Activated CD8-positive, alpha-beta T cell treated with anti-CD3 and anti-CD28 coated beads for 36 hours (primary cell): ENCODE measurements at regions of chr21 and their contacts with region 1.

Region 1: GRCh38 chr21:44927587-44928461 is 7.1 kb upstream of the ITGB2 start:
- DNase-seq: peak; percentile 98
- ATAC-seq: peak; percentile 75
- H3K4me3 Mint-ChIP-seq: peak overlapping the region; percentile 78
- H3K27ac Mint-ChIP-seq: peak overlapping the region; percentile 96
- H3K4me1 Mint-ChIP-seq: peaks cover 77% of the 10 kb centered on the region
- H3K27me3 Mint-ChIP-seq: no peaks in the 10 kb centered on the region
- CTCF ChIP-seq: no peak

Region 2: GRCh38 chr21:44873356-44874239 is 54.2 kb before region 1 on chr21 and contains the start of gene PTTG1IP:
- CTCF ChIA-PET with region 1: interaction called, 6 read pairs
- POLR2A ChIA-PET with region 1: interaction called, 5 read pairs
- intact Hi-C with region 1: loop called (anchors 10 kb)
- DNase-seq: peak; percentile 99
- ATAC-seq: peak; percentile 89
- H3K4me3 Mint-ChIP-seq: peak within 1 kb of the TSS; percentile 84
- H3K27ac Mint-ChIP-seq: peak within 1 kb of the TSS; percentile 83
- H3K4me1 Mint-ChIP-seq: peaks cover 40% of the 10 kb centered on the region
- H3K27me3 Mint-ChIP-seq: no peaks in the 10 kb centered on the region
- CTCF ChIP-seq: no peak
- total RNA-seq, gene PTTG1IP: 60.7 to 61.8 TPM

Region 3: GRCh38 chr21:44911389-44912157 is 16.3 kb before region 1 on chr21:
- CTCF ChIA-PET with region 1: interaction called, 63 read pairs
- POLR2A ChIA-PET with region 1: interaction called, 55 read pairs
- intact Hi-C with region 1: no loop called
- DNase-seq: peak; percentile 73
- ATAC-seq: peak; percentile 68
- H3K4me3 Mint-ChIP-seq: peak overlapping the region; percentile 58
- H3K27ac Mint-ChIP-seq: peak overlapping the region; percentile 78
- H3K4me1 Mint-ChIP-seq: peaks cover 78% of the 10 kb centered on the region
- H3K27me3 Mint-ChIP-seq: no peaks in the 10 kb centered on the region
- CTCF ChIP-seq: peak; percentile 82